T-cell (primary cell): ENCODE measurements at regions of chr9 and their contacts with region 1.

Region 1: GRCh38 chr9:92954049-92954861 is 6.9 kb downstream of the FGD3 start:
- DNase-seq: peak; percentile 62 to 93 (median 80)
- ATAC-seq: peak; percentile 87 to 92 (median 90)
- H3K4me3 ChIP-seq: peak overlapping the region; percentile 46 to 48
- H3K4me3 Mint-ChIP-seq: peak overlapping the region; percentile 77 to 94 (median 80)
- H3K27ac ChIP-seq: peak overlapping the region; percentile 88
- H3K27ac Mint-ChIP-seq: peak overlapping the region; percentile 99
- H3K4me1 ChIP-seq: peaks cover 55 to 84% of the 10 kb centered on the region in 2 experiments
- H3K4me1 Mint-ChIP-seq: peaks cover 84 to 92% (median 91%) of the 10 kb centered on the region in 3 donors
- H3K27me3 ChIP-seq: no peaks in the 10 kb centered on the region
- H3K27me3 Mint-ChIP-seq: no peaks in the 10 kb centered on the region

Region 2: GRCh38 chr9:92987677-92988076 is 33.4 kb after region 1 on chr9:
- CTCF ChIA-PET with region 1: interaction called in 1 of 2 experiments, 3 read pairs
- POLR2A ChIA-PET with region 1: interaction called in 1 of 2 experiments, 11 read pairs
- DNase-seq: no peak
- ATAC-seq: no peak
- H3K4me3 ChIP-seq: no peak overlapping the region
- H3K4me3 Mint-ChIP-seq: peak overlapping the region; percentile 8 to 55 (median 37)
- H3K27ac ChIP-seq: peak overlapping the region; percentile 16
- H3K27ac Mint-ChIP-seq: peak overlapping the region; percentile 83 to 85
- H3K4me1 ChIP-seq: peaks cover 27 to 58% of the 10 kb centered on the region in 2 experiments
- H3K4me1 Mint-ChIP-seq: peaks cover 85 to 93% (median 90%) of the 10 kb centered on the region in 3 donors
- H3K27me3 ChIP-seq: no peaks in the 10 kb centered on the region
- H3K27me3 Mint-ChIP-seq: no peaks in the 10 kb centered on the region

Region 3: GRCh38 chr9:93045521-93045920 is 91.3 kb after region 1 on chr9:
- CTCF ChIA-PET with region 1: no interaction called
- POLR2A ChIA-PET with region 1: interaction called in 1 of 2 experiments, 13 read pairs
- DNase-seq: no peak
- ATAC-seq: no peak
- H3K4me3 ChIP-seq: no peak overlapping the region
- H3K4me3 Mint-ChIP-seq: no peak overlapping the region
- H3K27ac ChIP-seq: no peak overlapping the region
- H3K27ac Mint-ChIP-seq: peak overlapping the region in 1 of 2 donors; percentile 4
- H3K4me1 ChIP-seq: peaks cover 11 to 40% of the 10 kb centered on the region in 2 experiments
- H3K4me1 Mint-ChIP-seq: peaks cover 48 to 60% (median 58%) of the 10 kb centered on the region in 3 donors
- H3K27me3 ChIP-seq: no peaks in the 10 kb centered on the region
- H3K27me3 Mint-ChIP-seq: no peaks in the 10 kb centered on the region

Region 4: GRCh38 chr9:93276968-93277367 is 322.7 kb after region 1 on chr9:
- CTCF ChIA-PET with region 1: no interaction called
- POLR2A ChIA-PET with region 1: no interaction called
- DNase-seq: peak in 2 of 35 experiments; percentile 5 to 10
- ATAC-seq: no peak
- H3K4me3 ChIP-seq: no peak overlapping the region
- H3K4me3 Mint-ChIP-seq: no peak overlapping the region
- H3K27ac ChIP-seq: no peak overlapping the region
- H3K27ac Mint-ChIP-seq: no peak overlapping the region
- H3K4me1 ChIP-seq: no peaks in the 10 kb centered on the region
- H3K4me1 Mint-ChIP-seq: peaks cover 0 to under 1% (median 0%) of the 10 kb centered on the region in 3 donors
- H3K27me3 ChIP-seq: peaks cover 0 to 7% of the 10 kb centered on the region in 2 experiments
- H3K27me3 Mint-ChIP-seq: peaks cover 3 to 29% of the 10 kb centered on the region in 2 donors